MCF 10A (cell line): ENCODE measurements at regions of chr19 and their contacts with region 1.

Region 1: DNA sequence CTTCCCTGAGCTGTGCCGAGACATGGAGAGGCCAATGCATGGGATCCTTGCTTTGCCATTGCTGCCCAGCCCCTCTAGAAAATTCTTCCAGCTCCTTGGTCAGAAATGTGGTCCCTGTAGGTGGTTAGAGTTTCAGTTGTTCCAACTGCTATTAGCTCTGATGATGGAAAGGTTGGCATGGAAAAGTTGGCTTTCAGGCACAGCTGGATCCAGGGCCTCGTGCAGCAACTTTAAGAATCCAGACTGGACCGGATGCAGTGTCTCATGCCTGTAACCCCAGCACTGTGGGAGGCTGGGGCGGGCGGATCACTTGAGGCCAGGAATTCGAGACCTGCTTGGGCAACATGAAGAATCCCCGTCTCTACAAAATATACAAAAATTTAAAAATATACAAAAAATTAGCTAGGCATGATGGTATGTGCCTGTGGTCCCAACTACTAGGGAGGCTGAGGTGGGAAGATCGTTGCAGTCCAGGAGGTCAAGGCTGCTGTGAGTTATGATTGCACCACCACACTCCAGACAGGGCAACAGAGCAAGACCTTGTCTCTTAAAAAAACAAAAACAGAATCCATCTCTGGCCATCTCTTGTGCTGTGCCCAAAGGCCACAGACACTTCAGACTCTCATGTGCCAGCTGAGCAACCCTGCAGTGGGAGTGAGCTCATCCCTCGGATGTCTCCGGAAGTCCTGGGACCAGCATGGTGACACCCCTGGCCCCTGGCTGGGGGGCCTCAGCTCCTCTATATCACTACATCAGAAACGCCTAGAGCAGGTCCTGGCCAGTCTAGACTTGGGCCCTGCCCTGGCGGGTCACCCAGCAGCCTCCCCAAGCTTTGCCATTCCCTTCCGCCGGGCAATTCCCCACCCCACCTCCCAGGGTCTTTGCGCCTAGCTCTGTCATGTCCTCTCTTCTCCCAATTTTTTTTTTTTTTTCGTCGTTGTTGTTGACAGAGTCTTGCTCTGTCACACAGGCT is 16.8 kb downstream of the MEX3D start:
- DNase-seq: no peak
- H3K4me3 Mint-ChIP-seq: no peak overlapping the region
- H3K27ac Mint-ChIP-seq: no peak overlapping the region
- H3K4me1 Mint-ChIP-seq: peaks cover 2% of the 10 kb centered on the region
- H3K27me3 Mint-ChIP-seq: no peaks in the 10 kb centered on the region
- CTCF ChIP-seq: no peak

Region 2: GRCh38 chr19:1566513-1567115 is 15.3 kb after region 1 on chr19:
- CTCF ChIA-PET with region 1: interaction called, 16 read pairs
- POLR2A ChIA-PET with region 1: no interaction called
- intact Hi-C with region 1: no loop called
- DNase-seq: peak; percentile 78
- H3K4me3 Mint-ChIP-seq: peak overlapping the region; percentile 65
- H3K27ac Mint-ChIP-seq: no peak overlapping the region
- H3K4me1 Mint-ChIP-seq: no peaks in the 10 kb centered on the region
- H3K27me3 Mint-ChIP-seq: peaks cover 17% of the 10 kb centered on the region
- CTCF ChIP-seq: no peak